K562 (cell line): ENCODE measurements at regions of chr20 and their contacts with region 1.

Region 1: DNA sequence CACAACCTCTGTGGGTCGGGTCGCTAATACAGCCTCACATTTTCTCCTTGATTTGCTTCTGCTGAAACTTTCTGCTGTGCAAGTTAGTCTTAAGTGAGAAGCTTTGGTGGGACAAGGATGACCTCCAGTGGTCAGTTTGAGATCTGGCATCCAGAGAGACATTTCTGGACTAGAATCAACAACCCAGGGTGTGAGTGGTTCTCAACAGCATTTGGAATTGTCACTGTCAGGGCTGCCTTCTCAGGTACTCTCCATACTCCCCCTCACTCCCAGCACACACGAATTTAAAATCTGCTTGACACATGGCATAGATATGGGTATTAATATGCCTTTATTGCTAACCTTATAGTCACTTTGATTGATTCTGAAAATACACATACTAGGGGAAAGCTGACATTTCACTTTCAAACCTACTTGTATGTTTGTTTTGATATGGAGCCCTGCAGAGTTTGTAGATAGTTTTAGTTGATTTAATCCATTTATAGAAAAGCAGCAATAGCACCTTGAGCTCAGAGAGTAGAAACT is 13.2 kb downstream of the OTOR start:
- DNase-seq: peak; percentile 37 to 61 (median 50)
- ATAC-seq: peak; percentile 85
- H3K4me3 ChIP-seq: no peak overlapping the region
- H3K27ac ChIP-seq: no peak overlapping the region
- H3K4me1 ChIP-seq: no peaks in the 10 kb centered on the region
- H3K27me3 ChIP-seq: no peaks in the 10 kb centered on the region
- CTCF ChIP-seq: peak; percentile 55 to 65 (median 58)
- EP300 ChIP-seq: no peak
- POLR2A ChIP-seq: no peak
- RAD21 ChIP-seq: peak; percentile 77 to 80

Region 2: GRCh38 chr20:15708984-15709598 is 1052.3 kb before region 1 on chr20:
- CTCF ChIA-PET with region 1: no interaction called
- POLR2A ChIA-PET with region 1: no interaction called
- in situ Hi-C with region 1: loop called (anchors 25 kb)
- intact Hi-C with region 1: no loop called
- DNase-seq: peak; percentile 26 to 39 (median 29)
- ATAC-seq: peak; percentile 61; the same call in 2 of the 3 replicates
- H3K4me3 ChIP-seq: no peak overlapping the region
- H3K27ac ChIP-seq: no peak overlapping the region
- H3K4me1 ChIP-seq: no peaks in the 10 kb centered on the region
- H3K27me3 ChIP-seq: no peaks in the 10 kb centered on the region
- CTCF ChIP-seq: peak; percentile 47
- EP300 ChIP-seq: no peak
- POLR2A ChIP-seq: no peak
- RAD21 ChIP-seq: peak; percentile 49 to 56

Region 3: GRCh38 chr20:16517946-16518783 is 243.2 kb before region 1 on chr20:
- CTCF ChIA-PET with region 1: interaction called, 3 read pairs
- POLR2A ChIA-PET with region 1: no interaction called
- in situ Hi-C with region 1: no loop called
- intact Hi-C with region 1: loop called (anchors 5 kb)
- DNase-seq: peak; percentile 18 to 47 (median 34)
- ATAC-seq: peak; percentile 81
- H3K4me3 ChIP-seq: no peak overlapping the region
- H3K27ac ChIP-seq: no peak overlapping the region
- H3K4me1 ChIP-seq: no peaks in the 10 kb centered on the region
- H3K27me3 ChIP-seq: no peaks in the 10 kb centered on the region
- CTCF ChIP-seq: peak; percentile 44 to 58 (median 55)
- EP300 ChIP-seq: no peak
- POLR2A ChIP-seq: no peak
- RAD21 ChIP-seq: peak; percentile 49 to 57

Region 4: DNA sequence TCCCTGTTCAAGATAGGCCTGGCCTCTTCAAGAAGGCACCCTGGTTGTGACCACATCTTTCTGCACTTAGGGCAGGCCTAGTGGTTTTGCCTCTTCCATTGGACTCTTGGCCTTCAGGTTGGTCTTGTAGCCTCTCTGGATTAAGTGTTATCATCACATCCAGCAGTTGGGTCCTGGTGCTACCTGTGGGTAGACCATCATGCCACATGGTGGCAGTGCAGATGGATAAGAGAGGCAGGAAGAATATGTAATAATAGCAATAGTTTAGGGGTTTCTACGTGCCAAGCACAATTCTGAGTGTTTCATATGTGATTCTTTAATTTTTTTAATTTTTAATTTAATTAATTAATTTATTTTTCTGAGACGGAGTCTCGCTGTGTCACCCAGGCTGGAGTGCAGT is 60.1 kb before region 1 on chr20:
- CTCF ChIA-PET with region 1: no interaction called
- POLR2A ChIA-PET with region 1: no interaction called
- in situ Hi-C with region 1: no loop called
- intact Hi-C with region 1: loop called (anchors 2 kb)
- DNase-seq: peak in 1 of 4 experiments; percentile 2
- ATAC-seq: no peak
- H3K4me3 ChIP-seq: no peak overlapping the region
- H3K27ac ChIP-seq: no peak overlapping the region
- H3K4me1 ChIP-seq: no peaks in the 10 kb centered on the region
- H3K27me3 ChIP-seq: no peaks in the 10 kb centered on the region
- CTCF ChIP-seq: peak in 1 of 3 experiments; percentile 12; a peak in 1 of 6 replicates
- EP300 ChIP-seq: no peak
- POLR2A ChIP-seq: no peak
- RAD21 ChIP-seq: peak in 1 of 2 experiments; percentile 8; a peak in 1 of 4 replicates

Region 5: GRCh38 chr20:16975682-16976081 is 214.3 kb after region 1 on chr20:
- CTCF ChIA-PET with region 1: no interaction called
- POLR2A ChIA-PET with region 1: no interaction called
- in situ Hi-C with region 1: no loop called
- intact Hi-C with region 1: no loop called
- DNase-seq: no peak
- ATAC-seq: no peak
- H3K4me3 ChIP-seq: no peak overlapping the region
- H3K27ac ChIP-seq: no peak overlapping the region
- H3K4me1 ChIP-seq: no peaks in the 10 kb centered on the region
- H3K27me3 ChIP-seq: no peaks in the 10 kb centered on the region
- CTCF ChIP-seq: no peak
- EP300 ChIP-seq: no peak
- POLR2A ChIP-seq: no peak
- RAD21 ChIP-seq: no peak